ENCODE measurements at regions of chr12 and their contacts with region 1.

Region 1: DNA sequence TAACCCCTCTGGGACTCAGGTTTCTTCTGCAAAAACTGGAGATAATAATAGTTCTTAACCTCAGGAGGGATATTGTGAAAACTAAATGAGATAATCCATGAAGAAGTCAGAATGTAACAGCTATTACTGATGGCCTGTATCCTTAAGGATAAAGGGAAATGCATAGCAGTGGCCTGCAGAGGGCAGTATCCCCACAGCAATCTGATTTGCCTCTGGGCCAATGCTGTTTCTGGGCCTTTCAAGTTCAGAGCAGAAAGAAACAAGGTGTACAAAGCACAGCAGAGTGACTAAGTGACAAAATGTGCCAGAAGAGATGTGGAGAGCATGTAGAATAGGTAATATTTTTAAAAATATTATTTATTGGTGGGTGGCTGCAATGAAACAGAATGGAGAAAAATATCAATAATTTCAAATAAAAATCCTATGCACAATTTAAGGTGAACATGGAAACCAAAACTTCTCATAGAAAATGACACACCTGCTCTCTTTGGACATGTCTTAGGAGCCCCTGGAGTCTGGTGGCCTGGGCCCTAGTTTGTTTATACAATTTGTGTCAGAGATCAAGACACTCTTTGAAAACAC is 90.3 kb downstream of the C12orf75 start:
- DNase-seq: no peak
- H3K4me3 ChIP-seq: no peak overlapping the region
- H3K27ac ChIP-seq: no peak overlapping the region
- H3K4me1 ChIP-seq: no peaks in the 10 kb centered on the region
- H3K27me3 ChIP-seq: no peaks in the 10 kb centered on the region
- CTCF ChIP-seq: peak; percentile 83 to 93 (median 87)
- POLR2A ChIP-seq: no peak

Region 2: DNA sequence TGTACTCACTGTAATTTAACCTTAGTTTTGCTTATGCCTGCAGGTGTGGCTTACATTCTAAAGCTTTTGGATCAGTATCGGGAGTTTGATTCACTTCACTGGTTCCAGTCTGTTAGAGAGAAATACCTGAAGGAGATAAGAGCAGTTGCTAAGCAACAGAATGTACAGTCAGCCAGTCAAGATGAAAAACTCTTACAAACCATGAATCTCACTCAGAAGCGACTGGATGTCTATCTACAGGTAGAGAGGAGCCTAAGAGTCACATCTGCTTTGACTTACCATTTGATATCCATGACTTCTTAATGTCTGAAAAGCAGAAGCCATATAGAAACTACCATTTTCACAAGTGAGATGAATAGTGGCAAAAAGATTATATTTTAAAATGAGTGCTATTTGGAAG is 256.7 kb before region 1 on chr12:
- intact Hi-C with region 1: no loop called
- DNase-seq: no peak
- H3K4me3 ChIP-seq: no peak overlapping the region
- H3K27ac ChIP-seq: no peak overlapping the region
- H3K4me1 ChIP-seq: peaks cover 8% of the 10 kb centered on the region
- H3K27me3 ChIP-seq: no peaks in the 10 kb centered on the region
- CTCF ChIP-seq: no peak
- POLR2A ChIP-seq: no peak

Region 3: GRCh38 chr12:105357162-105357691 is 63.5 kb before region 1 on chr12:
- intact Hi-C with region 1: no loop called
- DNase-seq: no peak
- H3K4me3 ChIP-seq: no peak overlapping the region
- H3K27ac ChIP-seq: no peak overlapping the region
- H3K4me1 ChIP-seq: peaks cover 23% of the 10 kb centered on the region
- H3K27me3 ChIP-seq: no peaks in the 10 kb centered on the region
- CTCF ChIP-seq: no peak
- POLR2A ChIP-seq: no peak

Region 4: DNA sequence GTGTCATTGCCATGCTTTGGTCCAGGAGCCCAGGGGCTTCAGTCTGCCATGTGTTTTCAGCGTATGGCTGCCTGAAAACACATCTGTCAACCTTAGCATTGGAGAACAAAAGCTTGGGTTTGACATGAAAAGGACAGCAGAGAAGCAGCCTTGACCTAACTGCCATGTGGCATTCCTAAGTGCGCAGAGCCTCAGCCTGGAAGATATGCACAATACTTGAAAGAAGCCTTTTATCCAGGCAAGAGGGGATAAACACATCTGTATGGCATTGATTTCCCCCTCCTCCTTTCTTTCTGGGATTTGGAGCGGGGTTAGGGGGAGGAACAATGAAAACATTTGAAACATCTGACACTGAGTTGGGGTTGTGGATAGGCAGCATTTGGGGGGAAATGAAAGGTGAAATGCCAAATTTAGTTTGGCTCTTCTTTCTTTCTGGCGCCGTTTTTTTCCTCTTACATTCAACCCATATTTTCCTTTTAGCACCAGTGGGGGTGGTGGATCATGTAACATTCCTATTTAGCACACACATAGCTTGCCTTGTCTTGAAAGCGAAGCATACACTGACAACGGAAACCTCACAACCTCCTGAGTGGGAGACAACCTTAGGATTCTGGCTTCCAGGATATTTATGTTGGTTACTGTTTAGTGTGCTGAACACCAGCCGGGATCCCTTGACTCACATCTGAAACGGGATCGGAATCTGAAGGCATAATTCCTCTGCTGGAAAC is 86.7 kb after region 1 on chr12:
- intact Hi-C with region 1: no loop called
- DNase-seq: no peak
- H3K4me3 ChIP-seq: no peak overlapping the region
- H3K27ac ChIP-seq: no peak overlapping the region
- H3K4me1 ChIP-seq: no peaks in the 10 kb centered on the region
- H3K27me3 ChIP-seq: no peaks in the 10 kb centered on the region
- CTCF ChIP-seq: no peak
- POLR2A ChIP-seq: no peak

Region 5: GRCh38 chr12:105831372-105831771 is 410.6 kb after region 1 on chr12:
- intact Hi-C with region 1: no loop called
- DNase-seq: no peak
- H3K4me3 ChIP-seq: no peak overlapping the region
- H3K27ac ChIP-seq: no peak overlapping the region
- H3K4me1 ChIP-seq: no peaks in the 10 kb centered on the region
- H3K27me3 ChIP-seq: no peaks in the 10 kb centered on the region
- CTCF ChIP-seq: no peak
- POLR2A ChIP-seq: no peak

Region 6: GRCh38 chr12:106226884-106227640 is 806.3 kb after region 1 on chr12:
- intact Hi-C with region 1: loop called (anchors 5 kb)
- DNase-seq: peak in 1 of 2 donors; percentile 79
- H3K4me3 ChIP-seq: no peak overlapping the region
- H3K27ac ChIP-seq: peak overlapping the region; percentile 78
- H3K4me1 ChIP-seq: peaks cover 28% of the 10 kb centered on the region
- H3K27me3 ChIP-seq: no peaks in the 10 kb centered on the region
- CTCF ChIP-seq: peak; percentile 48 to 84 (median 57)
- POLR2A ChIP-seq: no peak

Measured in vagina (tissue), 2 donors.